Ascending aorta (tissue), 2 donors: ENCODE measurements at regions of chr5 and their contacts with region 1.

Region 1: DNA sequence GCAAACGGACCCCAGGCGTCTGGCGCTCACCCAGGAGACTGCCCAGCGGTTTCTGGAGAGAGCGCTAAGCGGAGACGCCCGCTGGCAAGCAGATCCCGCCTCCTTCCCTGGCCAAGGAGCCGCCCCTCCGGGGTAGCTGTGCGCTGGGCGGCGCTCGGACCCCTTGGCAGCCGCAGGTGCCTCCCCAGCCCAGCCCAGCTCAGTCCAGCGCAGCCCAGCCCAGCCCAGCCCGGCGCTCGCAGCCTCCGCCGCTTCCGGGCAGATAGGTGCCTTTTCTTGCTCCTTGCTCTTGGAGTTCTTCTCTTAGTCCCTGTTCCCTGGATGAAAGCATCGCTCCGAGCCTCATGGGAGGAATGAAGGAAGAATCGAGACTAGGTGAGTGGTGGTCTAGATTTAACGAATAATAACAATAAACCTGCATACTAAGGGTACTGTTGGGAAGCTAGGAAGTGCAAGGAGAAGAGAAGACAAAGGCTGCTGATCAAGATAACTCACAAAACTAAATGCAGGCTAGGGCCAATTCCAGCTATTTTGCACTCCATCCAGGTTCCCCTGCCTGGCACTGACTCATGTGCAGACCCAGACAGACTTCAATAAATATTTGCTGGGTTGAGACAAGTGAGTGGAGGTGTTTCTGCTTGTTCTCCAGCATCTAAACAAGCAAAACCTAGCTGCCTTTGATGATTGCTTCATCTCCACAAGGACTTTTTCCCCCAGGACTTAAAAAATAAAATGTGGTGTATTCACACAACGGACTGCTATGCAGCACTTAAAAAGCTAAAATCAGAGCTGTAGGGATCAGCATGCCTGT is at the start of gene STK32A:
- DNase-seq: peak in 1 of 2 donors; percentile 85
- H3K4me3 ChIP-seq: peak within 1 kb of the TSS; percentile 73 to 77
- H3K27ac ChIP-seq: peak within 1 kb of the TSS; percentile 88 to 95
- H3K4me1 ChIP-seq: peaks cover 0 to 11% of the 10 kb centered on the region in 2 donors
- H3K27me3 ChIP-seq: no peaks in the 10 kb centered on the region
- CTCF ChIP-seq: no peak
- total RNA-seq, gene STK32A: 6.2 TPM

Region 2: DNA sequence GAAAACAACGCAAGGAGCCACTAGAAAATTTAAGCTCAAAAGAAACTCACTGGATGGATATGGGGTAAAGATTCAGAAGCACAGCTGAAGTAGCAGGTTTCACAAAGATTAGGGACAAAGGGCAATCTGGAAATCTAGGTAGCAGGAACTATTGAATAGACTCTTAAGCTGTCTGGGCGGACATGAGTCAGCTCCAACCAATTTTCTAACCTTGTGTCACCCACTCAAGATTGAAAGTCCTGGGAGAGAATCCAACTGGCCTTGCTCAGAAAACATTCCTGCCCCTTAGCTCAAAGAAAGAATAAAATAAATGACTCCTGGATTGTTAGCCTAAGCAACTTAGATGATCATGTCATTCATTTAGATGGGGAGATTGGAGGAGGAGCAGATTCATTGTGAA is 68.9 kb after region 1 on chr5:
- intact Hi-C with region 1: loop called (anchors 2 kb)
- DNase-seq: peak in 1 of 2 donors; percentile 81
- H3K4me3 ChIP-seq: no peak overlapping the region
- H3K27ac ChIP-seq: peak overlapping the region; percentile 77 to 88
- H3K4me1 ChIP-seq: peaks cover 0 to 31% of the 10 kb centered on the region in 2 donors
- H3K27me3 ChIP-seq: no peaks in the 10 kb centered on the region
- CTCF ChIP-seq: no peak

Region 3: DNA sequence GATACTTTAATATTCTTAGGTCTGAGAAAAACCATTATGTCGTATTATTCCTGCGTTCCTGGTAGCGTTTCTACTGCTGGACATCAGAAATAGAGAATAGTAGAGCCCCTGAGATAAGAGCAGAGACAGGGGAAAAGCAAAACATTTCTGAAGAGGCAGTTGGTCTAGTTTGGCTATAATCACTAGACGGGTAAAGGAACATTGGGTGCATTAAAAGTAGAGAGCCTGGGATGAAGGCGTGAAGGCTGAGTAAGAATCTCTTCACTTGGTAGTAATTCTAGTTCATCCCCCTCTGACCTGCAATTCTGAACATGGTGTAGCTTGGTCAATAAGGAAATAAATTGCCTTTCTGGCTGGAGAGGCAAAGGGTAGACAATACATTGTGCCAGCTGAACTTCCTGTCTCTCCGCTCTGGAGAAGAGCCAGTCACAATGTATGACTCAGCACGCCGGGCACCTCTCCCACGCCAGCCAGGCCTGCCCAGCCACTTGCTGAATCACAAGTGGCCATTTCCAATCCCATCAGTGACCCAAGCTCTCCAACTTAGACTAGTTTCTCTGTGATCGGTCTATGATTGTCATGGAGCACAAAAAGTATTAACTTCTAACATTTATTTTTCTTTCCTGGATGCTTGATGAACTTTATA is 75.2 kb after region 1 on chr5:
- intact Hi-C with region 1: loop called (anchors 2 kb)
- DNase-seq: peak; percentile 51 to 92
- H3K4me3 ChIP-seq: no peak overlapping the region
- H3K27ac ChIP-seq: peak overlapping the region; percentile 73 to 75
- H3K4me1 ChIP-seq: peaks cover 0 to 16% of the 10 kb centered on the region in 2 donors
- H3K27me3 ChIP-seq: no peaks in the 10 kb centered on the region
- CTCF ChIP-seq: no peak